ENCODE measurements at regions of chr22 and their contacts with region 1.

Region 1: DNA sequence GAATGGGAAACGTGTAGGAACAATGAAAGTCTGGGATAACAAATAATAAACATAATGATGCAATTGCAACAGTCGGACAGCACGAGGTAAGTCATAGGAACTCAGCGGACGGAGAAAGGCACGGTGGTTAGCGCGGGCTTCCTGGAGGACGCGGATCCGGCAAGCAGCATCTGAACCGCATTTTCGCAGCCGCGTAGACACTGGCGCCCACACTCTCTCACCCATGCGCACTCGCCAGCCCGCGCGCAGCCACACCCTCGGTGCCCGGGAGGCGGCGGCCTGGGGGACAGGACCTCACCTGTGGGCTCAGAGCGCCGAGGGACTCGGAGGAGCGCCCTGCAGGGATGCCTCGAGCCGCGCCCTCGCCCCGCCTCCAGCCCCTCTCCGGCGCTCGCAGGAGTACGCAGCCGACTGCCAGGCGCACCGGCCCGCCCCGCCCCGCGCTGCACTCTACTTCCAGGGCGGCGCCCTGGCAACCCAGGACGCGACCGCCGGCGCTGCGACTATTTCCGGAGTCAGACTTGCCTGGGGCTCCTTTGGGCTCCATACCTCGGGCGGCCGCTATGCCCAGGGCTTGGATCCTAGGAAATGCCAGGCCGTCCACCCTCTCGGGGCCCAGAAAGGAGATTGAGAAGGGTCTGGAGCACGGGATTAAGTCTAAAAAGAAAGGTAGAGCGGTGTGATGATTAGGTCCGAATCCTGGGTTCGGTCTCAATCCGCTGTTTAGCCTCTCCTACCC is at the start of gene TTLL1:
- DNase-seq: peak; percentile 96
- ATAC-seq: peak; percentile 95
- H3K4me3 Mint-ChIP-seq: peak within 1 kb of the TSS; percentile 84
- H3K27ac Mint-ChIP-seq: peak within 1 kb of the TSS; percentile 94
- H3K4me1 Mint-ChIP-seq: peaks cover 21% of the 10 kb centered on the region
- H3K27me3 Mint-ChIP-seq: no peaks in the 10 kb centered on the region
- total RNA-seq, gene TTLL1: 5.7 to 6.6 TPM

Region 2: GRCh38 chr22:42520663-42521546 is 568.2 kb before region 1 on chr22:
- CTCF ChIA-PET with region 1: no interaction called
- POLR2A ChIA-PET with region 1: no interaction called
- intact Hi-C with region 1: loop called in 1 of 2 experiments (anchors 1 kb)
- DNase-seq: no peak
- ATAC-seq: no peak
- H3K4me3 Mint-ChIP-seq: no peak overlapping the region
- H3K27ac Mint-ChIP-seq: no peak overlapping the region
- H3K4me1 Mint-ChIP-seq: peaks cover 9% of the 10 kb centered on the region
- H3K27me3 Mint-ChIP-seq: no peaks in the 10 kb centered on the region

Region 3: DNA sequence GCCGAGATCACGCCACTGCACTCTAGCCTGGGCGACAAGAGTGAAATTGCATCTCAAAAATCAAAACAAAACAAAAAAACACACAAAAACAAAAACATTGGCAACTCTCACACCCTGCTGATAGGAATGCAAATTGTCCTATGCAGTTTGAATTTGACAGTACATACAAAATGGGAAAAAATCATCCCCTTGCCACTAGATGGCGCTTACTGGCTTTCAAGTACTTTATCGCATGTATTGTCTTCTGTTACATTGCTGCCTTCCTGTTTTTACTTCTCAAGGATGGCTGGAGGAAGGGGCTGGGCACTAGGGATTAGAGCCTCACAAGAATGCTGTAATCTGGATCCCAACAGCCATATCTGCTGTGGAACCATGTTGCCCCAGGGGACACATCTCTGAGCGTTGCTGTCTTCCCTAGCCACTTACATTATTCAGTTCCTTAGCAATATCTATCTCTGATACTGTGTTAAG is 309.0 kb before region 1 on chr22:
- CTCF ChIA-PET with region 1: no interaction called
- POLR2A ChIA-PET with region 1: no interaction called
- intact Hi-C with region 1: loop called (anchors 1 to 5 kb)
- DNase-seq: peak; percentile 58
- ATAC-seq: peak; percentile 73
- H3K4me3 Mint-ChIP-seq: no peak overlapping the region
- H3K27ac Mint-ChIP-seq: no peak overlapping the region
- H3K4me1 Mint-ChIP-seq: no peaks in the 10 kb centered on the region
- H3K27me3 Mint-ChIP-seq: no peaks in the 10 kb centered on the region

Region 4: DNA sequence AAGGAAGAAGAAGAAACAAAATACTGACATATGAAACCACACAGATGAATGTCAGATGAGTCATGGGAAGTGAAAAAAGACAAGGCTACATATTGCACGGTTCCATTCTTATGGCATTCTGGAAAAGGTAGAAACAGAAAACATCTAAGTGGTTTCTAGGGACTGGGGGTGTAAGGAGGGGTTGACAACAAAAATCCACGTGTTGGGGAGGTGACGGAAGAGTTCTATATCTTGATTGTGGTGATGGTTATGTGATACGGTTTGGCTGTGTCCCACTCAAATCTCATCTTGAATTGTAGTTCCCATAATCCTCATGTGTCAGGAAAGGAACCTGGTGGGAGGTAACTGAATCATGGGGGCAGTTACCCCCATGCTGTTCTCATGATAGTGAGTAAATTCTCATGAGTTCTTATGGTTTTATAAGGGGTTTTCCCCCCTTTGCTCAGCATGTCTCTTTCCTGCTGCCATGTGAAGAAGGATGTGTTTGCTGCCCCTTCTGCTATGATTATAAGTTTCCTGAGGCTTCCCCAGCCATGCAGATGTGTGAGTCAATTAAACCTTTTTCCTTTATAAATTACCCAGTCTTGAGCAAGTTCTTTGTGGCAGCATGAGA is 225.7 kb before region 1 on chr22:
- CTCF ChIA-PET with region 1: interaction called, 3 read pairs
- POLR2A ChIA-PET with region 1: no interaction called
- intact Hi-C with region 1: loop called (anchors 1 to 10 kb)
- DNase-seq: peak; percentile 76
- ATAC-seq: peak; percentile 78
- H3K4me3 Mint-ChIP-seq: no peak overlapping the region
- H3K27ac Mint-ChIP-seq: peak overlapping the region; percentile 75
- H3K4me1 Mint-ChIP-seq: peaks cover 19% of the 10 kb centered on the region
- H3K27me3 Mint-ChIP-seq: peaks cover 6% of the 10 kb centered on the region

Region 5: DNA sequence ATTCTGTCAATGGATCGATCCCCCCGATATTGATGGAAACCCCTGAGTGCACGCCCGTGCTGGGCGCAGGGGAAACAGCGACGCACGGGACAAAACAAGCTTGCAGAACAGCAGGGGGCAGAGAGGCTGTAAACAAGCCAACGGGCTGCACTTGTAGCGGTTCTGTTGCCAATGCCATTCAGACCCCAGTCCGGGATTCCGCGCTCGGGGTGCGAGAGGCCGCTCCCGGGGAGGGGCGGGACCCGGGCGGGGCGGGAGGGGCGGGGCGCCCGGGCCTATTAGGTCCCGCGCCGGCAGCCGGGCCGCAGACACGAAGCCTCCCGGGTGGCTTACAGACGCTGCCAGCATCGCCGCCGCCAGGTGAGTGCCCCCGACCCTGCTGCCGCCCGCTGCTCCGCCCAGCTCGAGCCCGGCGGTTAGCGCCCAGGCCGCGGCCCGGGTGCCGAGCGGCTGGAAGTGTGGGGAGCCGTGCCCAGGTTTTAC is 21.3 kb after region 1 on chr22 and contains the start of gene BIK:
- CTCF ChIA-PET with region 1: no interaction called
- POLR2A ChIA-PET with region 1: no interaction called
- intact Hi-C with region 1: loop called in 1 of 2 experiments (anchors 1 kb)
- DNase-seq: peak; percentile 59
- ATAC-seq: peak; percentile 72
- H3K4me3 Mint-ChIP-seq: peak within 1 kb of the TSS; percentile 74
- H3K27ac Mint-ChIP-seq: no peak within 1 kb of the TSS
- H3K4me1 Mint-ChIP-seq: peaks cover 3% of the 10 kb centered on the region
- H3K27me3 Mint-ChIP-seq: peaks cover 3% of the 10 kb centered on the region
- total RNA-seq, gene BIK: 1.4 to 1.9 TPM

Region 6: GRCh38 chr22:43151251-43152002 is 62.3 kb after region 1 on chr22 and contains the start of gene TSPO:
- CTCF ChIA-PET with region 1: no interaction called
- POLR2A ChIA-PET with region 1: no interaction called
- intact Hi-C with region 1: loop called in 1 of 2 experiments (anchors 1 kb)
- DNase-seq: peak; percentile 81
- ATAC-seq: peak; percentile 58
- H3K4me3 Mint-ChIP-seq: peak within 1 kb of the TSS; percentile 88
- H3K27ac Mint-ChIP-seq: peak within 1 kb of the TSS; percentile 90
- H3K4me1 Mint-ChIP-seq: peaks cover 35% of the 10 kb centered on the region
- H3K27me3 Mint-ChIP-seq: no peaks in the 10 kb centered on the region
- total RNA-seq, gene TSPO: 61.7 to 114 TPM

Region 7: GRCh38 chr22:43643387-43643786 is 554.2 kb after region 1 on chr22:
- CTCF ChIA-PET with region 1: no interaction called
- POLR2A ChIA-PET with region 1: no interaction called
- intact Hi-C with region 1: no loop called
- DNase-seq: no peak
- ATAC-seq: no peak
- H3K4me3 Mint-ChIP-seq: no peak overlapping the region
- H3K27ac Mint-ChIP-seq: no peak overlapping the region
- H3K4me1 Mint-ChIP-seq: no peaks in the 10 kb centered on the region
- H3K27me3 Mint-ChIP-seq: peaks cover 14% of the 10 kb centered on the region